Transverse colon (tissue), 4 donors: ENCODE measurements at regions of chr1 and their contacts with region 1.

Region 1: DNA sequence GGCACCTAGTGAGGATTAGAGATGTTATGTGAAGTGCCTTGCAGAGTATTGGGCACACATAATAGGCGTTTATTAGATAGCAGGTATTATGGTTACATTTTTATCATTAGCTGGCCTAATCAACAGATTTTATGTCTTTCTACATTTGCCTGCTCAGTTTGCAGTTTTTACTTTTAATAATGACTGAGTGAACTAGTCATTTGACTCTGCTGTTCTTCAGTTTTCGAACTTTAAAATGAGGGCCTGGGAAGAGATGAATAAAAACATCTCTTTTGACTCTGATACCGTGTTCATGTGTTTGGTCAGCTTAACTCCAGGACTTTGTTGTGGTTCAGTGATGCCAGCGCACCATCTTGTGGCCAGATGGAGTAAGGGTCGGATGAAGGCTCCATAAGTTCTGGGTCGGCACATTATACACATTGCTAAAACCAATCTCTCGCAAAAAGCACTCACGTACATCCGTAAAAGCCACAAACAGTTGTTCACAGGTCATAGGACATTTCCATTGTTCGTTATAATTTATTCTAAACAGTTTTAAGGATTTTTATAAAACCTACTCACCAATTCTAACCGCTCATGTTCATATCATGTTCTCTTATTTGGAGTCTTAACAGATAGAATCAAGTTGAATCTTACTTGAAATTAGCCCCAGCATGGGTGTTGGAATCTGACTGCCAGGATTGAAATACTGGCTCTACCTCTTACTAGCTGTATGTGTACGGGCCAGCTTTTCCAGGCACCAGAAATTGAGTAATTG is 78.4 kb upstream of the GPR88 start:
- DNase-seq: peak; percentile 78
- H3K4me3 ChIP-seq: no peak overlapping the region
- H3K27ac ChIP-seq: peak overlapping the region in 2 of 4 donors; percentile 15 to 45
- H3K4me1 ChIP-seq: peaks cover 0 to 21% (median 2%) of the 10 kb centered on the region in 4 donors
- H3K27me3 ChIP-seq: no peaks in the 10 kb centered on the region
- CTCF ChIP-seq: peak; percentile 76 to 87 (median 86)
- EP300 ChIP-seq: no peak
- POLR2A ChIP-seq: no peak

Region 2: DNA sequence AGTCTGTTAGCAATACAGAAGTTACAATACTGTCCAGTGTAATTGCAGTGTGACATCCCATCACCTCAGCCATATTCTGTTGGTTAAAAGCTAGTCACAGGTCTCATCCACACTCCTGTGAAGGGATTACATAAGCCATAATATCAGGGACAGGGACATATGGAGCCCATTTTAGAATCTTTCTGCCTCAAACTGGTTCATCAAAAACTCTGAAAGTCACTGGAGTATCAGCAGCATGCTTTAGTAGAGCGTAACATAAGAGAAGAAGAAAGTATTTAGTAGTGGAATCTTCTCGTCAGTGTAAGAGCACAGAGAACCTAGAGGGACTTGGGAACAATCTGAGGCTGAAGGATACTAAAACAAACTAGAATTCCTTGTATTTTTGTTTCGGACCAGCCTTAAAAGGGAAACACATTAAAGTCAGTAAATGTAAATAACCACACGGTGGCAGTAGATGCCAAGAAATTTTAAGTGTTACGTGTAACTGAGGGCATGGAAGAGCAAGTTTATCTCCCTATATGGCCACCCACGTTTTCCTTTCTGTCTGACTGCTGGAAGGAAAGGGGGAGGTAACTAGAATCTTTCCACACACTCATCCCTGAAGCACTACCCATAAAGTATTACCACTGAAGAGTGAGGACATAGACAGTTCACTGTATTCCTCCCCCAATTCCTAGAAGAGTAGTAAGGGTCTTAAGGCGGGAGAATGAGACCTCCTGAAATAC is 651.0 kb before region 1 on chr1:
- in situ Hi-C with region 1: loop called (anchors 25 kb)
- intact Hi-C with region 1: no loop called
- DNase-seq: peak; percentile 11
- H3K4me3 ChIP-seq: no peak overlapping the region
- H3K27ac ChIP-seq: peak overlapping the region; percentile 50 to 77 (median 66)
- H3K4me1 ChIP-seq: peaks cover 0 to 9% (median 0%) of the 10 kb centered on the region in 4 donors
- H3K27me3 ChIP-seq: no peaks in the 10 kb centered on the region
- CTCF ChIP-seq: peak; percentile 63 to 75 (median 69)
- EP300 ChIP-seq: no peak
- POLR2A ChIP-seq: no peak

Region 3: GRCh38 chr1:100277866-100278265 is 181.7 kb before region 1 on chr1:
- in situ Hi-C with region 1: loop called in 2 of 4 experiments (anchors 25 kb)
- intact Hi-C with region 1: no loop called
- DNase-seq: no peak
- H3K4me3 ChIP-seq: no peak overlapping the region
- H3K27ac ChIP-seq: no peak overlapping the region
- H3K4me1 ChIP-seq: no peaks in the 10 kb centered on the region
- H3K27me3 ChIP-seq: no peaks in the 10 kb centered on the region
- CTCF ChIP-seq: no peak
- EP300 ChIP-seq: no peak
- POLR2A ChIP-seq: no peak

Region 4: DNA sequence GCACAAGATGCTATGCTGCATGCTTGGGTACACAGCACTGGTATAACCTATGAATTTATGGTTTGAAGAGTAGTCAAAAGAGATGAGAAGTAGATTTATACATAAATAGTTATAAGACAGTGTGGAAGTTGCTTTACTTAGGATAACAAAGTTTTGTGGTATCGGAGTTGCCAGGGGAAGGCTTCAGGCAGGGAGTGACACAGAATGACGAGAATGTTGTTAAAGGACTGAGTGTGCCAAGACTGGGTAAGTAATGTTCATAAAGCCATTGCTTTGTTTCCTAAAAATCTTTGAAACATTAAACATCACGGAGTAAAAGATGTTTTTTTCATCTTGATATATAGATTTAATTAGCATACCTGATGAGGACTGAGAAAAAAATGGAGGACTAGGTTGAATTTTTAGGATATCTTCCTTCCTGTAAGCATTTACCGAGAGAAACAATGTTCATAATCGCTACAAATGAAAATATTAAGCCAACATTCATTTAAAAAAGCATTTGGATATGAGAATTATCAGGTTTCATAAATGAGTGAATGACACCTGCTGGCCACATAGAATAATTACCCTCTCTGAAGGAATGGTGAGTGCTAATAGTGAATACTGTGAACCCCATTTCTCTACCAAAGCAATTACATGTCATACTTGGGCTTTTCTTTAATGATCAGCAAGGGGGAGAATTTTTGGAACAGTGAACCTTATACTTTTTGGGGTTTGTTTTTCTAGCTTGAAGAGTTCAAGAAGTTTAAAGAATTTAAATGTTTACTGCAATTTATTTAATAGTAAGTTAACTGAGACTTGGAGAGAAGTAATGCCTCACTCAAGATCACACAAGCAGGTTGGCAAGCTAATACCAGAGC is 406.7 kb after region 1 on chr1:
- in situ Hi-C with region 1: loop called in 3 of 4 experiments (anchors 10 to 25 kb)
- intact Hi-C with region 1: loop called (anchors 5 kb)
- DNase-seq: no peak
- H3K4me3 ChIP-seq: no peak overlapping the region
- H3K27ac ChIP-seq: no peak overlapping the region
- H3K4me1 ChIP-seq: no peaks in the 10 kb centered on the region
- H3K27me3 ChIP-seq: no peaks in the 10 kb centered on the region
- CTCF ChIP-seq: peak; percentile 34 to 52 (median 39)
- EP300 ChIP-seq: no peak
- POLR2A ChIP-seq: no peak

Region 5: DNA sequence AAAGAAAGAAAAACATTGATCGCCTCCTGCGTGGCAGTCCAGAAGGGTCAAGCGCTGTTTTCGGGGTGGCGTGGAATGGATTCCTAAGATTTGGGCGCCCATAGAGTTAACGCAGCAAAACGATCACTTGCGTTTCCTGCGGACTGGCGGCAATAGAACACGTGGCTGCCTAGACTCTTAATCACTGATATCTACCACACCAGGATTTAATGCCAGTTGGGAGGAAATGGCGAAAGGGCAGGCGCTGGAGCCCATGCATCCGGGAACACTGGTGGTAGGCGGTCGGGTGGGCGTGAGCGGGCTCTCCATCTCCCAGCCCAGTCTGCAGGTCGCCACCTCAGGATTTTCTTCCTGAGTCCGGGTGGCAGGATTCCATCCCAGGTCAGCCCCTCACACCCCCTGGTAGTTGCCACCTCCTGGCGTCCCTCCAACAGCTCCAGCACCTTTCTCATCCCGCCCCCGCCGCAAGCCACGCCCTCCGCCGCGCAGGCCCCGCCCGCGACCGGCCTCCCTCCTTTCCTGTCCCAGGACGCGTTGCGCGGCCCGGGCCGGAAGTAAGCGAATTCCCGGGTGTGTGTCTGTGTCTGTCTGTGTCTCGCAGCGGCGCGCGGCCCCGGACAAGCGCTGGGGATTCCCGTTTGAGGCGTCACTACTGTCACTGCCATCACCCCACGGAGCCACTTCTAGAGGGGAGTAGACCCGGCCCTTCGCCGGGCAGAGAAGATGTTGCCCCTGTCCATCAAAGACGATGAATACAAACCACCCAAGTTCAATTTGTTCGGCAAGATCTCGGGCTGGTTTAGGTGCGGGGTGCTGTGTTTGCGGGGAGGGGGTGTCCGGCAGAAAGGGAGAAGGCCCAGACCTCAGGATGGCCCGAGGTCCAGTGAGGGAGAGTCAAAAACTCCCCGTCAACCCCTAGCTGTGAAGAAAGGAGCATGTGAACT is 436.3 kb after region 1 on chr1 and contains the start of gene SLC30A7:
- in situ Hi-C with region 1: loop called in 1 of 4 experiments (anchors 25 kb)
- intact Hi-C with region 1: no loop called
- DNase-seq: peak; percentile 98
- H3K4me3 ChIP-seq: peak within 1 kb of the TSS; percentile 55 to 80 (median 68)
- H3K27ac ChIP-seq: peak within 1 kb of the TSS; percentile 93 to 99 (median 96)
- H3K4me1 ChIP-seq: peaks cover 0 to 31% (median 20%) of the 10 kb centered on the region in 4 donors
- H3K27me3 ChIP-seq: no peaks in the 10 kb centered on the region
- CTCF ChIP-seq: no peak
- EP300 ChIP-seq: no peak
- POLR2A ChIP-seq: peak; percentile 90
- total RNA-seq, gene SLC30A7: 10.1 to 22.7 (median 17.5) TPM